ENCODE measurements at regions of chr1 and their contacts with region 1.

Region 1: GRCh38 chr1:53959664-53960250 is 13.6 kb downstream of the LRRC42 start:
- DNase-seq: no peak
- H3K4me3 ChIP-seq: no peak overlapping the region
- H3K27ac ChIP-seq: no peak overlapping the region
- H3K4me1 ChIP-seq: peaks cover 26% of the 10 kb centered on the region
- H3K27me3 ChIP-seq: no peaks in the 10 kb centered on the region
- CTCF ChIP-seq: peak; percentile 75

Region 2: DNA sequence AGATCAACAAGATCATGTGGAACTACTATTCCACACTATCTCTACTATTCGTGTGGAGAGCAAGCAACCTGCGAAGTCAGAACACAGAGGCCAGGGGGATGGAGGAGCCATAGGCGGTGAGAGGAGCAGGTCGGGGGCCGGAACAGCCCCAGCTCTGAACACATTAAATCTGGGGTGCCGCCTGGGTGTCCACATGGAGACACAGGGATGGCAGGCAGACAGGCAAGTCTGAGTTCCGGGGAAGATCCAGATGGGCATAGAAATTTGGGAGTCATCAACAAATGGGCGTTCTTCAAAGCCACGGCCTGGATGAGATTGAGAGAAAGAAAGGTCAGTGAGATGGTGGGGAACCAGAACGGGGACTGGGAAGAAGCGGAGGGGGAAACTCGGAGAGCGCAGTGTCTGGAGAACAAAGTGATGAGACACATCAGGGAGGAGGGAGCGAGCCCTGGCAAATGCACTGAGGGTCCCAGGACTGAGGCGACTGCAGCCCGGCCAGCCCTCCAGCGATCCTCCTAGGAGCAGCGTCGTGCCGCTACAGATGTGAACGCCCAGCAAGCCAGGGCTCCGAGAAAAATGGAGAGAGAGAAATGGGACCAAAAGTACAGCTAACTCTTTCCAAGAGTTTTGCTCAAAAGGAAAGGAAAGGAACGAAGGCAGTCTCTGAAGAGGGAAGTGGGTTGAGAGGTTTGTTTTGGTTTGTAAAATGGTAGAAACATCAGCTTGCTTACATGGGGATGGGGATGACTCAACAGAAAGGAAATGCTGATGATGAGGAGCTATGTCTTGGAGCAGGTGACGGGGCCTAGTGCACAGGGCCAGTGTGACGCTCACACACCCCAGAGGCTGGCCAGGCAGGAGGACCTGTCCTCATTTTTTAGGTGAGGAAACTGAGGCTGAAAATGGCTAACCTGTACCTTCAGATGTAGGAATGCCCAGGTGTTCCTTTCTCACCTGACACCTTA is 305.2 kb before region 1 on chr1:
- CTCF ChIA-PET with region 1: interaction called, 10 read pairs
- POLR2A ChIA-PET with region 1: no interaction called
- intact Hi-C with region 1: no loop called
- DNase-seq: no peak
- H3K4me3 ChIP-seq: no peak overlapping the region
- H3K27ac ChIP-seq: no peak overlapping the region
- H3K4me1 ChIP-seq: no peaks in the 10 kb centered on the region
- H3K27me3 ChIP-seq: peaks cover 86% of the 10 kb centered on the region
- CTCF ChIP-seq: no peak

Region 3: GRCh38 chr1:53860967-53861411 is 98.8 kb before region 1 on chr1:
- CTCF ChIA-PET with region 1: interaction called, 20 read pairs
- POLR2A ChIA-PET with region 1: no interaction called
- intact Hi-C with region 1: no loop called
- DNase-seq: peak; percentile 47 to 50
- H3K4me3 ChIP-seq: no peak overlapping the region
- H3K27ac ChIP-seq: no peak overlapping the region
- H3K4me1 ChIP-seq: no peaks in the 10 kb centered on the region
- H3K27me3 ChIP-seq: no peaks in the 10 kb centered on the region
- CTCF ChIP-seq: peak; percentile 80

Region 4: GRCh38 chr1:53889304-53890298 is 70.2 kb before region 1 on chr1 and contains the start of gene YIPF1:
- CTCF ChIA-PET with region 1: no interaction called
- POLR2A ChIA-PET with region 1: interaction called, 5 read pairs
- intact Hi-C with region 1: loop called (anchors 2 kb)
- DNase-seq: peak; percentile 80 to 89
- H3K4me3 ChIP-seq: peak within 1 kb of the TSS; percentile 83
- H3K27ac ChIP-seq: peak within 1 kb of the TSS; percentile 81
- H3K4me1 ChIP-seq: peaks cover 25% of the 10 kb centered on the region
- H3K27me3 ChIP-seq: no peaks in the 10 kb centered on the region
- CTCF ChIP-seq: no peak
- total RNA-seq, gene YIPF1: 23.3 and 26.1 TPM in 2 replicates

Region 5: DNA sequence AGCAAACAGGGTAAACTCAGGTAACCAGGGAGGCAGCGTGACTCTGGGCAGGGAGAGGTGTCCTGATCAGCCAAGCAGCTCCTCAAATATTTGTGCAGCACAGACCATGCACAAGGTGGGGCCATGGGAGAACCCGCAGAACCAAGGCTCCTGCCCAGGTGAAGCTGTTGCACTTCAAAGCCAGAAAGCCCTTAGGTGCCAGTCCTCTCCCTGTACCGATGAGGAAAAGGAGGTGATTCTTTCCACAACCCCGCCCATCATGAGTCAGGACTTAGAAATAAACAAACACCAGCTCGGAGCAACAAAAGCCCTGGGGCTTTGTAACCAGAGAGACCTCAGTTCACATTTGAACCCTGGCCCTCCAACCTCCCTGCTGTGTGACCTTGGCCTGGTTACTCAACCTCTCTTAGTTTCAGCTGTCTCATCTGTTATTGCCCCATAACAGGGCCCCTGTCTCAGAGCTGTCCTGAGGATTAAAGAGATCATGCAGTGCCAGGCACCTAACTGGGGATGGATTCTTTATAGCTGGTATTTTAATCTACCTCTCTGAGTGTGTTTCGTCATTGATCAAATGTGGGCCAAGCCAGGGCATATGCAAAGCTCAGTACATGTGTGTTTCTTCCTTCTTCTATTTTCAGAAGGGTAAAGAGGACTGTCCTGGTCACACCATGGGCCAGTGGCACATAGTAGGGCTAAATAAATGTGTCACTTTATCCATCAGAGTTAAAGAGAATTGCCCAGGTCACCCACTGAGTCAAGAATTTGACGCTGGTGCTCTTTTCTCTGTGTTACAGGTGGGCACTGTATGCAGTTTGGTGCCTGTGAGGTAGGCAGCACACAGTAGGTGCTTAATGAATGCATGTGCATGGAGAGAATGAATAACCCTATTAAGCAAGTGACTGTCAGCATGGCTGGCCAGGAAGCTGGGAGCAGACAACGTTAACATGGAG is 56.8 kb after region 1 on chr1:
- CTCF ChIA-PET with region 1: interaction called, 3 read pairs
- POLR2A ChIA-PET with region 1: no interaction called
- intact Hi-C with region 1: loop called (anchors 5 kb)
- DNase-seq: peak; percentile 91 to 98
- H3K4me3 ChIP-seq: no peak overlapping the region
- H3K27ac ChIP-seq: peak overlapping the region; percentile 75
- H3K4me1 ChIP-seq: peaks cover 38% of the 10 kb centered on the region
- H3K27me3 ChIP-seq: no peaks in the 10 kb centered on the region; the same call in 1 of the 2 replicates
- CTCF ChIP-seq: no peak